ENCODE measurements at regions of chr7 and their contacts with region 1.

Region 1: GRCh38 chr7:77759294-77759889 is 38.8 kb downstream of the TMEM60 start:
- DNase-seq: peak; percentile 84
- H3K4me3 Mint-ChIP-seq: no peak overlapping the region
- H3K27ac Mint-ChIP-seq: no peak overlapping the region
- H3K4me1 Mint-ChIP-seq: peaks cover 32% of the 10 kb centered on the region
- H3K27me3 Mint-ChIP-seq: no peaks in the 10 kb centered on the region

Region 2: GRCh38 chr7:77351539-77352004 is 407.8 kb before region 1 on chr7:
- CTCF ChIA-PET with region 1: no interaction called
- intact Hi-C with region 1: loop called (anchors 5 kb)
- DNase-seq: peak; percentile 54
- H3K4me3 Mint-ChIP-seq: peak overlapping the region; percentile 51
- H3K27ac Mint-ChIP-seq: peak overlapping the region; percentile 37
- H3K4me1 Mint-ChIP-seq: peaks cover 55% of the 10 kb centered on the region
- H3K27me3 Mint-ChIP-seq: no peaks in the 10 kb centered on the region

Region 3: DNA sequence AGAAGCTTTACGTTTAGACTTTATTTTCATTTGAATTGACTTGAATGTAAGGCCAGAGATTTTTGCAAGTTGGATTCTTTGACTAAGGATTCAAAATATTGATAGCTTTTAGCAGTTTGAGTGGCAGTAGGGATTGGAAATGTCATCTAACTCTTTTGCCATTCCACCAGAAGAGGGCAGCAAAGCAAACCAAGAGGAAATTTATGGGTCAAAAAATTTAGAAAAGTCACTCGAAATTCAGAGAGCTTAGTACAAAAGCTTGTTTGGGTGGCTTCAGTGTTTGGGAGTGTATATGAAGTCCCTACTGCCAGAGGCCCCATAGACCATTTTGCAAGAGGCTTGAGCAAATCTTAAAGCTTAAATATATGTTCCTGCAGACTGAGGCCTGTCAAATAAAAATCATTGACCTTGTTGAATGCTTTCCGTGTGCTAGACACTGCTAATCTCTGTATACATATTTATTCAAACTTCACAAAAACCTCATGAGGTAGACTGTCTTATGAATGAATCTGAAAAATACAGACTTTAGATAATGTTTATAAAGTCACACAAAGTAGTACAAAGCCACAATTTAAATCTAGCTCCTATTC is 107.7 kb before region 1 on chr7:
- CTCF ChIA-PET with region 1: interaction called, 52 read pairs
- intact Hi-C with region 1: loop called (anchors 1 kb)
- DNase-seq: peak; percentile 46
- H3K4me3 Mint-ChIP-seq: no peak overlapping the region
- H3K27ac Mint-ChIP-seq: no peak overlapping the region
- H3K4me1 Mint-ChIP-seq: no peaks in the 10 kb centered on the region
- H3K27me3 Mint-ChIP-seq: no peaks in the 10 kb centered on the region

Region 4: DNA sequence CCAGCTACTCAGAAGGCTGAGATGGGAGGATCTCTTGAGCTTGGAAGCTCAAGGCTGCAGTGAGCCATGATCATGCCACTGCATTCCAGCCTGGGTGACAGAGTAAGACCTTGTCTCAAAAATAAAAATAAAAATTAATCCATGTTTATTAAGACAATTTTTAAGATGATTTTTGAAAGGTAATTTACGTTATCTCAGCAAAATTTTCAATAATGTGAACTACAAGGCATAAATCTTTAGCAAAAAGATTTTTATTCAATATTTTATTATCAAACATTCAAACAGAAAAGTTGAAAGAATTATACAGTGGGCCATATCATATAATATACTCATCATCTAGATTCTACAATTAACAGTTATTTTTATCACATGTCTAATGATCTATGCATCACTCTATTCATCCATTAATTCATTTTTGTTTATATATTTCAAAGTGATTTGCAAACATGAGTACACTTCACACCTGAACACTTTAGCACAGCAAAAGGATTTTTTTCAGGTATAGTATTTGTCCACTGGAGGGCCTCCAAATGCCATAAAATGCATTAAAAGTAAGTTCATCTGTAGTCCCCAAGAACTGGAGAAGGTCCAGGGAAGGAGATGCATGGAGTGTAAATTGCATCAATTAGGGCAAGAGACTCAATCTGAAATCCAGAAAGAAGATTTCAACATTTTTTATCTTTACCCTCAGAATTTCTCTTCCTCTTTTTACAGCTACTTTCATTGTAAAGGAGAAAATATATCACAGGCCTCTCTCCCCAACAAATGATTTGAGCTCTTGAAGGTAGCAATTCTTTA is 101.8 kb before region 1 on chr7:
- CTCF ChIA-PET with region 1: interaction called, 52 read pairs
- intact Hi-C with region 1: loop called (anchors 1 kb)
- DNase-seq: peak; percentile 18
- H3K4me3 Mint-ChIP-seq: no peak overlapping the region
- H3K27ac Mint-ChIP-seq: no peak overlapping the region
- H3K4me1 Mint-ChIP-seq: no peaks in the 10 kb centered on the region
- H3K27me3 Mint-ChIP-seq: no peaks in the 10 kb centered on the region

Region 5: GRCh38 chr7:77696198-77697028 is 63.0 kb before region 1 on chr7 and contains the start of gene RSBN1L:
- CTCF ChIA-PET with region 1: interaction called, 15 read pairs
- intact Hi-C with region 1: loop called (anchors 1 kb)
- DNase-seq: peak; percentile 98
- H3K4me3 Mint-ChIP-seq: peak within 1 kb of the TSS; percentile 97
- H3K27ac Mint-ChIP-seq: peak within 1 kb of the TSS; percentile 96
- H3K4me1 Mint-ChIP-seq: peaks cover 44% of the 10 kb centered on the region
- H3K27me3 Mint-ChIP-seq: no peaks in the 10 kb centered on the region
- total RNA-seq, gene RSBN1L: 15.7 to 16.9 TPM

Region 6: DNA sequence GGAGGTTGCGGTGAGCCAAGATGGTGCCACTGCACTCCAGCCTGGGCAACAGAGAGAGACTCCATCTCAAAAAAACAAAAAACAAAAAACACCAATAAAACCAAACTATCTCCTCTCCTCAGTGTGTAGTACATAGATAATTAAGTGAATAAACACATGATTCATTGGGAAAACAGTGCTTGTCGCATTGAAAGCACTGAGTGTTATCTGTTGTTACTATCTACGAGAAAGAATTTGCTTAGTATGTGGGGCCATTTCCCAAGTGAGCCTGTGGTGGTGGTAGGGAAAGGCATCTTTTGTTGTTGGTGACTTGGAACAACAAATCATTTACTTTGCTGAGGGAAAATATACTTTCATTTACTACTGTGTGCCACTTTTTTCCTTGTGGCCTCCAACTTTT is 20.5 kb before region 1 on chr7:
- CTCF ChIA-PET with region 1: no interaction called
- intact Hi-C with region 1: no loop called
- DNase-seq: no peak
- H3K4me3 Mint-ChIP-seq: no peak overlapping the region
- H3K27ac Mint-ChIP-seq: no peak overlapping the region
- H3K4me1 Mint-ChIP-seq: peaks cover 10% of the 10 kb centered on the region
- H3K27me3 Mint-ChIP-seq: no peaks in the 10 kb centered on the region

Region 7: DNA sequence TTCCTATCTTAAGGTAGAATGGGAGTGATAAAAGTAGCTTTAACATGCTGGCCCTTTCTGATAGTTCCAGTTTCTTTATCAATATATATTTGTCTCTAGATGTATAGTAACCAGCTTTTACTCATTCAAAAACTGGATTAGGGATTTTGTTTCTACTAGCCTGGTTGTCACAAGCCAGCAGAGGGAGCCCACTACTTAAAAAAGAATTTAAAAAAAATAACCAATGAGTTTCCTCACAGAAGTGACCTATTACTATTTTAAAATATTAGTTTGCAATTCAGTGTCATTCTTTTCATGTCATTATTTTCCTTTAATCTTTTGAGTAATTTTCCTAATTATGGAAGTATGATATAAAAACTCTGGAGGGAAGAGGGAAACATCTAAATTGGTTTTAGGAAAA is 181.3 kb after region 1 on chr7:
- CTCF ChIA-PET with region 1: no interaction called
- intact Hi-C with region 1: loop called (anchors 5 kb)
- DNase-seq: peak; percentile 40
- H3K4me3 Mint-ChIP-seq: no peak overlapping the region
- H3K27ac Mint-ChIP-seq: no peak overlapping the region
- H3K4me1 Mint-ChIP-seq: peaks cover 2% of the 10 kb centered on the region
- H3K27me3 Mint-ChIP-seq: no peaks in the 10 kb centered on the region

Region 8: DNA sequence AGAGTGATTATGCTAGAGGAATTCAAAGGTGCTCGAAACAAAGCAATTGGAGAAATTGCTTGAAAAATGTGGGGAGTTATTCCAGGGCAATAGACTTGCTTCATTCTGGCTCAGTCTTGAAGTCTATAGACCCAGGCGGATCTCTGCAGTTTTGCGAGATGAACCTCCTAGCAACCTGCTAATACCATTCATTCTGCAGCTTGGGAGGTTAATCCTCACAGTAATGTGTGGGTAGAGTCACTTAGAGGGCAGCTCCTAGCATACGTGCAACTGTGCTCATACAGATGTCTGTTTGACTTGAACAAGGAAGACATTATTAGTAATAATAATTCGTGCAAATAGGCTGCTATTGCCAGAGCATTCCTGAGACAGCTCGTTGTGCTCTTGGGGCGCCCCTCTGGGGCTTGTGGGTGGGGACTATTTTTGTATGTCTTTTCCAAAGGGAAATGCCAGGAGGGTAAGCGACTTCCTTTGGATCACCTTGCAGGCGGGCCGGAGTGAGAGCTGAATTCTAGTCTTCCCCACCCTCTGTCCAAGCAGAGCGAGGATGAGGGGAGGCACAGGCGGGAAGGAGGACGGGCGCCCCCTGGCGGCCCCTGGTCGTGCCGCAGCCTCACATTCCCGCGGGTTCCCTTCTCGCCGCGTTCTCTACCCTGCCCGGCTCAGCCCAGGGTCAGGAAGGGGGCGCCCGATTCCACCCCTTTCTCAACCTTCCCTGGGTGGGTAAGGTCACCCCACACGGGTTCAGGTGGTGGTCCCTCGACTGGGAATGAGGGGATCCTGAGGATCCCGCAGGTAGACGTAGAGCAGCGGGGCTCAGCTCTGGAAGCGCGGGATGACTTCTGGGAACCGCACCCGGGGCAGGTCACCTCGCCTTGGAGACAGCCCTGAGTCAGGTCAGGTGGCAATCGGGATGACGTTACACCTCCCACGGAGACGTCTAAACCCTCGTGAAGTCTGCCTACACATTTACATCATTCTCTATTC is 280.7 kb after region 1 on chr7:
- CTCF ChIA-PET with region 1: interaction called, 3 read pairs
- intact Hi-C with region 1: loop called (anchors 2 kb)
- DNase-seq: peak; percentile 54
- H3K4me3 Mint-ChIP-seq: no peak overlapping the region
- H3K27ac Mint-ChIP-seq: no peak overlapping the region
- H3K4me1 Mint-ChIP-seq: no peaks in the 10 kb centered on the region
- H3K27me3 Mint-ChIP-seq: peaks cover 29% of the 10 kb centered on the region